Lower leg skin (tissue), 4 donors: ENCODE measurements at regions of chr20 and their contacts with region 1.

Region 1: GRCh38 chr20:10812759-10813327 is 139.0 kb upstream of the JAG1 start:
- DNase-seq: no peak
- H3K4me3 ChIP-seq: no peak overlapping the region
- CTCF ChIP-seq: no peak
- POLR2A ChIP-seq: no peak

Region 2: GRCh38 chr20:9021701-9022103 is 1791.1 kb before region 1 on chr20:
- intact Hi-C with region 1: loop called (anchors 5 kb)
- DNase-seq: no peak
- H3K4me3 ChIP-seq: no peak overlapping the region
- CTCF ChIP-seq: no peak
- POLR2A ChIP-seq: no peak